ENCODE measurements at regions of chr2 and their contacts with region 1.

Region 1: GRCh38 chr2:60550178-60550983 is 3.1 kb downstream of the BCL11A start:
- DNase-seq: peak in 7 of 10 donors; percentile 62 to 94 (median 74)

Region 2: DNA sequence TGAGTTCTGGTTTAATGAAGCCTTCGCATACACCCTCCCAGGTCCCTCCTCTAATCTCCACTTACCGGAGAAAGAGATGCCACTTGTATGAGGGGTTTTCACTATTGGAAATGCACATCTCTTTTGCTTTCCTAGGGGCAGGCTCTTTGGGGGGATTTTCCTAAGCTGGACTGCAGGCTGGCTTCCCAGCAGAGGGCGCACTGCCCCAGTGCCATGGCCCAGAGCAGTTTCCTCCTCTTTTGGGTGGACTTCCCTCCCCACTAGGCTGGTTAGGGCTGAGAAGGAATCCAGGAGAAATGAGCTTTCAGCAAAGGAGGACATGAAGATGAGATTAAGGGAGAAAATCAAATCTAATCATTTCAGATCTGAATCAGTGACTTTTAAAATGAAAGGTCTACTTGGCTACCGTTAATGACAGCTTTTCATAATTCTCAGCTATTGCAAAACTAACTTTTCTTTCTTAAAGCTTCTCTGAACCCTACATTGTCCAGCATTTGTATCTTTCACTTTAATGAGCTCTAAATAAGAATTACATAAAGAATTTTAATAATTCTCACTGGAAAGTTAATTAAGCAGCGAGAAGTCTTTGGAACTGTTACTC is 1525.1 kb before region 1 on chr2:
- intact Hi-C with region 1: loop called (anchors 5 kb)
- DNase-seq: peak in 5 of 10 donors; percentile 11 to 82 (median 41)

Region 3: DNA sequence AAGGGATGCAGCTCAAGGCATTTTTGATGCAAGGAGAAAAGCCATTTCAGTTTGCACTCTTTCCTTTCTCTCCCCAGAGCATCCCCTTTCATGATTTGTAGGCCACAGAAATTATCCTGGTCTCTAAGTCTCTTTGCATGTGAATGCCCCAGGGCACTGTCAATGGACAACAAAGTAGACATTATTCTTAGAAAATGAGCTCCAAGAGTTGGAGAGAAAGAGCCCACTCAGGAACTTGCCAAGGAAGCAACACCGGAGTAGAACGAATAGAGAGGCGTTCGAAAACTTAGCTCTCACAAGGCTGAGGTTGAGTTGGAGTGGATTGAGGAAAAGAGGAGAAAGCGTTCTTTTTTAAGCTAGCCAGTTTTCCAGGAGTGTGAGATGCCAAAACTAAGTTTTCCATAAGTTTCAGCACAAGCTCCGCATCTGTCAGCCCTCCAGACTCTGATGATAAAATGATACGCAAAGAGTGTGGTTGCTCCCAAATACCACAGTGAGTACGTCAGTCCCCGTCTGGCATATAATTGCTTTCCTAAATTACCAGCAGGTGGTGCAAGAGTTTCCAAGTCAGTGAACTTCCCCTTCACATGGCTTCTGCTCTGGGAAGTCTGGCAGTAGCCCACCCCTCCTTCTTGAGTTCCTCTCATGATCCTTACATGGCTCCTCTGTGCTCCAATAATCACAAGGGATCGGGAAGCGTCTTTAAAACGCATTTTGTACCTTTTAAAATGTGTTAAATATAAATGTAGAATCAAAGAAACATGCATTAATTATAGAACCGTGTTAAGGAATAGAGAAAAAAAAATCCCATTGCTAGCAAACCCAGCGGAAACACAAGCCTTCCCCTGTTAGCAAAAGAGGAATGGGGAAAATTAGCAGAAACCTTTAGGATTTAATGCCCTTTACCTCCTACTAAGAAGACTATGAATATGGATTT is 1248.6 kb before region 1 on chr2:
- intact Hi-C with region 1: loop called (anchors 2 kb)
- DNase-seq: peak in 4 of 10 donors; percentile 6 to 16 (median 11)

Region 4: GRCh38 chr2:60047944-60048525 is 502.3 kb before region 1 on chr2:
- intact Hi-C with region 1: no loop called
- DNase-seq: no peak

Region 5: DNA sequence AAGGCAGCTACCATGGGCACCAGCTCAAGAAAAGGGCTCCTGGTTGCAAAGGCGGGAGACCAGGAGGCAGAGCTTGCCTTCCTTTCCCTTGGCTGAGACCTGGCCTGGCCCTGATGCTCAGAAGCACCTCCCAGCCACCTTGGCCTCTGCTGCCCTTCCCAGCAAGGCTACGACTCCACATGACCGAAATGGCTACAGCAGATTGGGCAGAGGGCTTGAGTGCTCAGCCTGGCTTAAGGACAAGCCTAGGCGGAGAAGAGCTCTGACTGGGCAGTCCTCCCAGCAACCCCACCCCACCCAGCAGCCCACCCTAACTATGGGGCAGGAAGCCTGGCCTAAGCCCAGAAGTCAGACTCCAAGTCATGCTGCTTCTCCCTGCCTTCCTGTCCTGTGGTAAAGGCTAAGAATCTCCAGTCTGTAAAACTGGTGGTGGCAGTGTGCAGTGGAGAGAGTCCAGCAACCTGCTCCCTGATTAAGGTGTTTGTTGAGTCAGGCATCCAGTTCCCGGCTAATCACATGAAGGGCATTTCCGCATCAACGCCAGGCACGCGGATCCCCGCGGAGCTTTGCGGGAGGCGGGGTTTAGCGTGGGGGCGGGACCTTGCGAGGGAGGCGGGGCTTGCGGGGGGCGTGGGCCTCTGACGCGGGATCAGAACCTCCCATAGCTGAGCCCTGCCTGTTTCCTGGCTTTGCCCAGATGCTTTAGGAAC is 252.9 kb before region 1 on chr2:
- intact Hi-C with region 1: loop called (anchors 10 kb)
- DNase-seq: peak in 3 of 10 donors; percentile 13 to 90 (median 51)

Region 6: DNA sequence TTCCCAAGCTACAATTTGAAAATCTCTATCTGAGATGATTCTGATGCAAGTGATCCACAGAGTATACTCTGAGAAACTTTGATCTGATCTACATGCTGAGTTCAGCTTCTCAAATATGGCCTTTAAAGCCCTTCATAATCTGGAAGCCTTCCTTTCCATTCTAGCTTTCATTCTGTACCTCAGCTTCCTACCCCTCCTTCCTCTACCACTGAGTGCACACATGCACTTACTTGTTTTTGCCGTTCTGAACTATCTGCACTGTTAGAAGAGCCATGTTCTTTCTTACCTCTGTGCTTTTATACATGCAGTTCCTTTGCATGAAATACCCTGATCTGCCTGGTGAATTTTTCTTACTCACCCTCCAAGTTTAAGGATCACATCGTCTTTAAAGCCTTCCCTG is 356.0 kb after region 1 on chr2:
- intact Hi-C with region 1: no loop called
- DNase-seq: no peak

Measured in posterior cingulate gyrus (tissue), 11 donors.